ENCODE measurements at regions of chr19 and their contacts with region 1.

Region 1: DNA sequence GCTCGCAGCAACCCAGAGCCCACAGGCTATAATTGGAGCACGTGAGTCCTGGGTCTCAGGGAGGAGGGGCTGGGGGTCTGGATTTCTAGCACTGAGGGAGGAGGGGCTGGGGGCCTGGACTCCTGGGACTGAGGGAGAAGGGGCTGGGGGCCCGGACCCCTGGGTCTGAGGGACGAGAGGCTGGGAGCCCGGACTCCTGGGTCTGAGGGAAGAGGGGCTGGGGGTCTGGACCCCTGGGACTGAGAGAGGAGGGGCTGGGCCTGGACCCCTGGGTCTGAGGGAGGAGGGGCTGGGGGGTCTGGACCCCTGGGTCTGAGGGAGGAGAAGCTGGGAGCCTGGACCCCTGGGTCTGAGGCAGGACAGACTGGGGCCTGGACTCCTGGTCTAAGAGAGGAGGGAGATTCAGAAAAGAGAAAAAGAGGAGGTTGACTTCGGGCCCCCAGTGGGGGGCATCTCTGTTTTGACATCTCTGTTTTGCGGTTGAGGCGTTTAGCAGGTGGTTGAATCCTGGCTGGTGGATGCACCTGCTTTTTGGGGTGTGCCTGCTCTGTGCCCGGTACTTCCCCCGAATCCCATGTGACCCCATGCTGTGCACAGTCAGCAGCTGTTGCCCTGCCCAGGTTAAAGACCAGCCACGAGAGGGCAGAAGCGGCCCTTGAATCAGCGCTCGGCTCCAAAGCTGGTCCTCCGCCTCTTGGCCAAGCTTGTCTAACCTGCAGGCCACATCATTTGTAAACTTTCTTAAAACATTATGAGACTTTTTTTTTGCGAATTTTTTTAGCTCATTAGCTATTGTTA is 10.5 kb downstream of the PVR start:
- DNase-seq: peak; percentile 73 to 88 (median 76)
- ATAC-seq: peak; percentile 57 to 85 (median 75)
- H3K4me3 ChIP-seq: no peak overlapping the region
- H3K27ac ChIP-seq: no peak overlapping the region
- H3K4me1 ChIP-seq: peaks cover 0 to 25% (median 5%) of the 10 kb centered on the region in 12 donors
- H3K27me3 ChIP-seq: no peaks in the 10 kb centered on the region
- CTCF ChIP-seq: peak; percentile 50 to 75 (median 68)
- POLR2A ChIP-seq: no peak

Region 2: DNA sequence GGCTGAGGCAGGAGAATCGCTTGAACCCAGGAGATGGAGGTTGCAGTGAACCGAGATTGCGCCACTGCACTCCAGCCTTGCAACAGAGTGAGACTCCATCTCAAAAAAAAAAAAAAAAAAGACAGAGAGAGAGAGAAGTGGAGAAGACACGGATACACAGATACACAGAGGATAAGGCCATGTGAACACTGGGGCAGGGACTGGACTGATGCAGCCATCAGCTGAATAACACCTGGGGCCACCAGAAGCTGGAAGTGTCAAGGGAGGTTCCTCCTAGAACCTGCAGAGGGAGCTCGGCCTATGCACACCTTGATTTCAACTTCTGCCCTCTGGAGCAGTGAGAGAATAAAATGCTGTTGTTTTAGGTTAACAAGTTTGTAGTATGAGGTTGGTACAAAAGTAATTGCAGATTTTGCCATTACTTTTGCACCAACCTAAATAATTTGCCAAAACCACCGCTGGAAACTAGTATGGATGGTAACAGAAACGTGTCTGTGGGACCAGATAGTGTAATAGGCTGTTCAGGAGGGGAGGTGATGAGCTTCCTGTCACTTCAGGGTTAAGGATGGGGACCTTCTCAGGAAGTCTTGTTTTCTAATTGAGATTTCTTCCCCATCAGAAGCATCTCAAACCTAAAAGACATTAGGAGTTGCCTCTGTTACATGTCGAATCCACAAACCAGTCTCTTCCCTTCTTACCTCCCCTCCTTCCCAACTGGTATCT is 77.2 kb before region 1 on chr19:
- intact Hi-C with region 1: loop called in 6 of 10 experiments (anchors 2 to 5 kb)
- DNase-seq: peak in 2 of 5 donors; percentile 20 to 45
- ATAC-seq: peak in 3 of 4 donors; percentile 52 to 71 (median 66)
- H3K4me3 ChIP-seq: no peak overlapping the region
- H3K27ac ChIP-seq: no peak overlapping the region
- H3K4me1 ChIP-seq: no peaks in the 10 kb centered on the region
- H3K27me3 ChIP-seq: no peaks in the 10 kb centered on the region
- CTCF ChIP-seq: peak in 11 of 12 donors; percentile 40 to 66 (median 50)
- POLR2A ChIP-seq: no peak

Region 3: GRCh38 chr19:44587963-44588770 is 66.0 kb before region 1 on chr19:
- intact Hi-C with region 1: loop called in 2 of 10 experiments (anchors 2 to 5 kb)
- DNase-seq: no peak
- ATAC-seq: peak in 2 of 4 donors; percentile 35 to 38
- H3K4me3 ChIP-seq: no peak overlapping the region
- H3K27ac ChIP-seq: peak overlapping the region in 4 of 12 donors; percentile 33 to 67 (median 52)
- H3K4me1 ChIP-seq: peaks cover 0 to 22% (median 8%) of the 10 kb centered on the region in 12 donors
- H3K27me3 ChIP-seq: no peaks in the 10 kb centered on the region
- CTCF ChIP-seq: peak in 6 of 12 donors; percentile 5 to 38 (median 30)
- POLR2A ChIP-seq: no peak

Measured in heart left ventricle (tissue), 16 donors.